B cell (primary cell): ENCODE measurements at regions of chr3 and their contacts with region 1.

Region 1: GRCh38 chr3:186930641-186931531 is 560 bp downstream of the ST6GAL1 start:
- DNase-seq: peak; percentile 89
- ATAC-seq: peak; percentile 84
- H3K4me3 ChIP-seq: peak overlapping the region; percentile 84 to 94 (median 91)
- H3K4me3 Mint-ChIP-seq: peak overlapping the region; percentile 100
- H3K27ac ChIP-seq: peak overlapping the region; percentile 79 to 83
- H3K27ac Mint-ChIP-seq: peak overlapping the region; percentile 98
- H3K4me1 ChIP-seq: peaks cover 26 to 40% of the 10 kb centered on the region in 2 donors
- H3K4me1 Mint-ChIP-seq: peaks cover 58% of the 10 kb centered on the region
- H3K27me3 ChIP-seq: no peaks in the 10 kb centered on the region
- H3K27me3 Mint-ChIP-seq: no peaks in the 10 kb centered on the region
- CTCF ChIP-seq: peak; percentile 47

Region 2: DNA sequence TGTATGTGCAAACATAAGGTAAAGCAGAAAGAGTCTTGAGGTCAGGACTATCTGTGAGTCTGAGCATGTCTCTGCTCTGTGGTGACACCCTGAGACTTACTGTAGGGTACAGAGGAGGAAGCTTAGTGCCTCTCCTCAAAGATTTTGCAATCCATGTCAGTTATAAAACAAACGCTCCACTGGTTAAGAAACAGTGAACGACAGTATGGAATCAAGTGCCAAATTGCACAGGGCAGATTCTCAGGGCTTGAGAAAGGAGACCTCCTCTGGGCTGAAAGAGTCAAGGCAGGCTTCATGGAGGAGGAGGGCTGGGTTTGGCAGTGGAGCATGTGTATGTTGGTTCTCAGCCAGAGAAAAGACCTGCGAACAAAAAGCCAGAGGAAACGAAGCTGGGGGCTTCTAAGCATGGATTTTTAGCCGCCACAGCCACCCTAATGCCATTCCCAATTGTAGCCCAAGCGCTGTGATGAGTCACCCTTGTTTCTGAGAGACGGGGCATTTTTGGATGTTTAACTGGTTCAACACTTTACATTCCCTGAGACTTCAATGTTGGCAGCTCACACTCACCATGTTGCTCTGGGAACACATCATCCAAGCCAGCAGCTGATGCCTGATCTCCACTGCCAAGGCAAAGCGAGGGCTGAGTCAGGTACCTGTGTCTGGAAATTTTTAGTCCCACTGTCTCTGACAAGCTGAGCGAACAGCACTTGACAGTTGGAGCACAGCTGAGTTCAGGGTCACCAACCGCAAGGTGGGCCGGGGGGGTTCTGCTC is 565.5 kb before region 1 on chr3:
- CTCF ChIA-PET with region 1: no interaction called
- POLR2A ChIA-PET with region 1: no interaction called
- intact Hi-C with region 1: no loop called
- DNase-seq: no peak
- ATAC-seq: no peak
- H3K4me3 ChIP-seq: no peak overlapping the region
- H3K4me3 Mint-ChIP-seq: no peak overlapping the region
- H3K27ac ChIP-seq: no peak overlapping the region
- H3K27ac Mint-ChIP-seq: no peak overlapping the region
- H3K4me1 ChIP-seq: peaks cover 19 to 22% of the 10 kb centered on the region in 2 donors
- H3K4me1 Mint-ChIP-seq: peaks cover 19% of the 10 kb centered on the region
- H3K27me3 ChIP-seq: peaks cover 0 to 32% (median 11%) of the 10 kb centered on the region in 4 experiments
- H3K27me3 Mint-ChIP-seq: peaks cover 11% of the 10 kb centered on the region
- CTCF ChIP-seq: no peak

Region 3: GRCh38 chr3:186789554-186790260 is 141.2 kb before region 1 on chr3:
- CTCF ChIA-PET with region 1: no interaction called
- POLR2A ChIA-PET with region 1: no interaction called
- intact Hi-C with region 1: loop called (anchors 5 kb)
- DNase-seq: peak; percentile 29
- ATAC-seq: no peak
- H3K4me3 ChIP-seq: no peak overlapping the region
- H3K4me3 Mint-ChIP-seq: no peak overlapping the region
- H3K27ac ChIP-seq: peak overlapping the region in 1 of 2 donors; percentile 61
- H3K27ac Mint-ChIP-seq: no peak overlapping the region
- H3K4me1 ChIP-seq: peaks cover 33 to 35% of the 10 kb centered on the region in 2 donors
- H3K4me1 Mint-ChIP-seq: peaks cover 51% of the 10 kb centered on the region
- H3K27me3 ChIP-seq: no peaks in the 10 kb centered on the region
- H3K27me3 Mint-ChIP-seq: no peaks in the 10 kb centered on the region
- CTCF ChIP-seq: no peak

Region 4: DNA sequence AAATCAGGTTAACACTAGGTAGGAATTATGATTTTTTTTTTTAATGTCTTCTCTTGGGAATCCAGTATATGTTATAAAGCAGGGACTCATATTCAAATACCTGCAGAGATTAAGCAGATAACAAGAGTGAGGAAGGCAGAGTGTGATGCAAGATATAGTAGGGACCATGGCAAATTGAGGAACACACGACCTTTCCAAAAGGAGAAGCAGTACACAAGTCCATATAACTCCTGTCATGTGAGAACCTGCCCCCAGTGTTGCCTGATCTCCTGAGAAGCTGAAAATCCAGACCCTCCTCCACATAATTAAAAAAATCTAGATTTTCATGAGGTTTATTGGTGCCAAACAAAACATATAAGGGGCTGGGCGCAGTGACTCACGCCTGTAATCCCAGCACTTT is 128.2 kb before region 1 on chr3:
- CTCF ChIA-PET with region 1: no interaction called
- POLR2A ChIA-PET with region 1: no interaction called
- intact Hi-C with region 1: no loop called
- DNase-seq: no peak
- ATAC-seq: no peak
- H3K4me3 ChIP-seq: no peak overlapping the region
- H3K4me3 Mint-ChIP-seq: no peak overlapping the region
- H3K27ac ChIP-seq: no peak overlapping the region
- H3K27ac Mint-ChIP-seq: no peak overlapping the region
- H3K4me1 ChIP-seq: peaks cover 15 to 19% of the 10 kb centered on the region in 2 donors
- H3K4me1 Mint-ChIP-seq: peaks cover 25% of the 10 kb centered on the region
- H3K27me3 ChIP-seq: no peaks in the 10 kb centered on the region
- H3K27me3 Mint-ChIP-seq: no peaks in the 10 kb centered on the region
- CTCF ChIP-seq: no peak

Region 5: GRCh38 chr3:186946756-186947375 is 16.0 kb after region 1 on chr3:
- CTCF ChIA-PET with region 1: interaction called, 12 read pairs
- POLR2A ChIA-PET with region 1: no interaction called
- intact Hi-C with region 1: no loop called
- DNase-seq: no peak
- ATAC-seq: no peak
- H3K4me3 ChIP-seq: no peak overlapping the region
- H3K4me3 Mint-ChIP-seq: peak overlapping the region; percentile 52
- H3K27ac ChIP-seq: no peak overlapping the region
- H3K27ac Mint-ChIP-seq: peak overlapping the region; percentile 69
- H3K4me1 ChIP-seq: peaks cover 20 to 35% of the 10 kb centered on the region in 2 donors
- H3K4me1 Mint-ChIP-seq: peaks cover 68% of the 10 kb centered on the region
- H3K27me3 ChIP-seq: no peaks in the 10 kb centered on the region
- H3K27me3 Mint-ChIP-seq: no peaks in the 10 kb centered on the region
- CTCF ChIP-seq: no peak

Region 6: DNA sequence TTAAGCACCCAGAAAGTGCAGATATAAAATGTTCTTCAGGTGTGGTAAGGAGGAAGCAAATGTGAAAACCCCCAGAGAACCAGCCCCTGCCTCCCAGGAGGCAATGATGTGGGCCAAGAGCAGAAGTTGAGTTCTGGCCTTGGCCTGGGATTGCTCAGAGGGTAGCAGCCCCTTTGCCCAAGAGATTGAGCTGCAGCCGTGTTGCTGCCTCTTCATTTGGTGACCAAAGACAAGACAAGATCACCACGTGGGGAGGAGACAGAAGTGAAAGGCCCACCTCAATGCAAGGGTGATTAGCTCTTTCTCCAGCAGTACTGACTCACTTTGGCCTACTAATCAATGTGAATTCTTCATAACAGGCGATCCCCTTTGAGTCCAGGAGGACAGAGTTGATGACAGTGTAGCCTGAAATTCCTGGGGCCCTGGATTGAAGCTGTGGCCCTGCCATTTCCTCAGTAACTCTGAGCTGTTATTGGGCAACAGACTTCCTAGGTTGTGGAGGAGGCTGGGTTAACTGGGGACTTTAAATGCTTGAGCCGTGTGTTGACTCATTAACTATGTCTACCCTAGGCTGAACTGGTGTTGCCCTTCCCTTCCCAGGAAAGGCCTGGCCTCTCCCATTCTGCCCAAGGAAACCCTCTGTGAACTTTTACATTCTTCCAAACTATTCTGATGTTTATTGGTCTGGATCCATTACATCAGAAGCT is 85.9 kb after region 1 on chr3:
- CTCF ChIA-PET with region 1: interaction called, 12 read pairs
- POLR2A ChIA-PET with region 1: interaction called, 7 read pairs
- intact Hi-C with region 1: loop called (anchors 2 kb)
- DNase-seq: peak; percentile 83
- ATAC-seq: peak; percentile 58
- H3K4me3 ChIP-seq: peak overlapping the region in 2 of 5 experiments; percentile 4 to 28
- H3K4me3 Mint-ChIP-seq: peak overlapping the region; percentile 75
- H3K27ac ChIP-seq: peak overlapping the region; percentile 92 to 96
- H3K27ac Mint-ChIP-seq: peak overlapping the region; percentile 90
- H3K4me1 ChIP-seq: peaks cover 97% of the 10 kb centered on the region in 2 donors
- H3K4me1 Mint-ChIP-seq: peaks cover 92% of the 10 kb centered on the region
- H3K27me3 ChIP-seq: no peaks in the 10 kb centered on the region
- H3K27me3 Mint-ChIP-seq: no peaks in the 10 kb centered on the region
- CTCF ChIP-seq: no peak

Region 7: DNA sequence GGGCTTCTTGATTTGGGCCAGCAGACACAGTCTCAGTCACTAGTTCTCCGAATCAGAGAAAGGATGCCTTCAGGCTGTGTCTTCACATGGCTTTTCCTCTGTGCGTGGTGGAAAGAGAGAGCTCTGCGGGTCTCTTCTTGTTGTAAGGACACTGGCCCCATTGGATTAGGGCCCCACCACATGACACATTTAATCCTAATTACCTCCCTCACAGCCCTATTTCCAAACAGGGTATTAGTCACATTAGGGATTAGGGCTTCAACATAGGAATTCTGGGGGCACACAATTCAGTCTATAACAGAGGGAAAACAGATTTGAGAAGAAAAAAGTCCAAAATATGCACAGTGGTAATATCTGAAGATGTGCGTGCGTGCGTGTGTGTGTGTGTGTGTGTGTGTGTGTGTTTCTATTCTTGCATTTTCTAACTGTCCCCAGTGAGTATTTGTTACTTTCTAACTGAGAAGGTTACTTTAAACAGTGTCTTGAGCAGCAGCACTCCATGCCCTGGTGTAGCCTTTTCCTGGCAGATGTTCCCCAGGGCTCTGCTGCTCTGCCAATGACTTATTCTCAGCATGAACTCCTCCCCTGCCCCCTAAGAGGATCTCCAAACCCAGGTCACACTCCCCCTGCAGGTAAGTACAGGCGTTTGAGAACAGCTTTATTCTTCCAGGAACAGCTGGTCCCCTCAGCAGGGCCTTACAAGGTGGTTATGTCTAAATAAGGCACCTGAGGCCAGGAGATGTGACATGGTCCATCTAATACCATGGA is 135.5 kb after region 1 on chr3:
- CTCF ChIA-PET with region 1: interaction called, 14 read pairs
- POLR2A ChIA-PET with region 1: interaction called, 6 read pairs
- intact Hi-C with region 1: loop called (anchors 1 kb)
- DNase-seq: peak; percentile 87
- ATAC-seq: peak; percentile 31
- H3K4me3 ChIP-seq: peak overlapping the region in 3 of 5 experiments; percentile 19 to 45 (median 26)
- H3K4me3 Mint-ChIP-seq: peak overlapping the region; percentile 81
- H3K27ac ChIP-seq: peak overlapping the region; percentile 97 to 98
- H3K27ac Mint-ChIP-seq: peak overlapping the region; percentile 97
- H3K4me1 ChIP-seq: peaks cover 70 to 86% of the 10 kb centered on the region in 2 donors
- H3K4me1 Mint-ChIP-seq: peaks cover 87% of the 10 kb centered on the region
- H3K27me3 ChIP-seq: no peaks in the 10 kb centered on the region
- H3K27me3 Mint-ChIP-seq: no peaks in the 10 kb centered on the region
- CTCF ChIP-seq: peak; percentile 40

Region 8: DNA sequence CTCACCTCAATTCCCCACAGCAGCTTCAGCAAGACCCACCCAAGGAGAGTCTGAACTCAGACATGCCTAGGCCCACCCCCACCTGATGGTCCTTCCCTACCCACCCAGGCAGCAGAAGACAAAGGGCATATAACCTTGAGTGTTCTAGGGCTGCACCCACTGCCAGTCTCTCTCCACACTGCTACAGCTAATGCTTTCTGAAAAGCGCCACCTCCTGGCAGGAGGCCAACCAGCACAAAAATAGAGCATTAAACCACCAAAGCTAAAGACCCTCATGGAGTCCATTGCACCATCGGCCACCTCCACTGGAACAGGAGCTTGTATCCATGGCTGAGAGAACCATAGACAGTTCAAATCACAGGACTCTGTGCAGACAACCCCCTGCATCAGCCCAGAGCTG is 219.7 kb after region 1 on chr3:
- CTCF ChIA-PET with region 1: interaction called, 13 read pairs
- POLR2A ChIA-PET with region 1: no interaction called
- intact Hi-C with region 1: no loop called
- DNase-seq: peak; percentile 70
- ATAC-seq: peak; percentile 70
- H3K4me3 ChIP-seq: no peak overlapping the region
- H3K4me3 Mint-ChIP-seq: no peak overlapping the region
- H3K27ac ChIP-seq: no peak overlapping the region
- H3K27ac Mint-ChIP-seq: no peak overlapping the region
- H3K4me1 ChIP-seq: no peaks in the 10 kb centered on the region
- H3K4me1 Mint-ChIP-seq: peaks cover 3% of the 10 kb centered on the region
- H3K27me3 ChIP-seq: no peaks in the 10 kb centered on the region
- H3K27me3 Mint-ChIP-seq: peaks cover 6% of the 10 kb centered on the region
- CTCF ChIP-seq: peak; percentile 75